ENCODE measurements at regions of chr6 and their contacts with region 1.

Region 1: GRCh38 chr6:10954590-10955010 is 67.7 kb downstream of the SYCP2L start:
- DNase-seq: peak; percentile 79
- H3K4me3 Mint-ChIP-seq: no peak overlapping the region
- H3K27ac Mint-ChIP-seq: no peak overlapping the region
- H3K4me1 Mint-ChIP-seq: no peaks in the 10 kb centered on the region
- H3K27me3 Mint-ChIP-seq: peaks cover 15% of the 10 kb centered on the region

Region 2: GRCh38 chr6:10722820-10723566 is 231.6 kb before region 1 on chr6 and contains the start of gene TMEM14C:
- CTCF ChIA-PET with region 1: no interaction called
- DNase-seq: peak; percentile 89
- H3K4me3 Mint-ChIP-seq: peak within 1 kb of the TSS; percentile 82
- H3K27ac Mint-ChIP-seq: peak within 1 kb of the TSS; percentile 90
- H3K4me1 Mint-ChIP-seq: peaks cover 56% of the 10 kb centered on the region
- H3K27me3 Mint-ChIP-seq: no peaks in the 10 kb centered on the region

Region 3: DNA sequence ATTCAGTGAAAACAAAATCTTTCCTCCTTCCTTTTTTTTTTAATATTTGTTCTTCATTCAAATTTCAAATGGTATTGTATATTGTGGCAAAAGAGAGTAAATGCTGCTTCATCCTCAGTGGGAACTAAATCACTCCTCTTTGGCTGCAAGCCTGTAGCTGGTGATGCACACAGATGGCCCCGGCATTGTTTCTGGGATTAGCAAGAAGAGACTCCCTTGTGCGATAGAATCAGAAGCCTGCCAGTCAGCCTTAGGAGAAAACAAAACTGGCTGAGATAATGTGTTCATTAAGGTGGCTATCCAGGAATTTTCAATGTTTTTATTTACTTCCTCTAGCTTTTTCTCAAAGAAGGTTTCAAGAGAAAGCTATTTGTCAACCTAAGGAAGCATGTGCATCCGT is 110.2 kb after region 1 on chr6:
- CTCF ChIA-PET with region 1: interaction called, 32 read pairs
- DNase-seq: no peak
- H3K4me3 Mint-ChIP-seq: no peak overlapping the region
- H3K27ac Mint-ChIP-seq: no peak overlapping the region
- H3K4me1 Mint-ChIP-seq: no peaks in the 10 kb centered on the region
- H3K27me3 Mint-ChIP-seq: peaks cover 7% of the 10 kb centered on the region

Region 4: DNA sequence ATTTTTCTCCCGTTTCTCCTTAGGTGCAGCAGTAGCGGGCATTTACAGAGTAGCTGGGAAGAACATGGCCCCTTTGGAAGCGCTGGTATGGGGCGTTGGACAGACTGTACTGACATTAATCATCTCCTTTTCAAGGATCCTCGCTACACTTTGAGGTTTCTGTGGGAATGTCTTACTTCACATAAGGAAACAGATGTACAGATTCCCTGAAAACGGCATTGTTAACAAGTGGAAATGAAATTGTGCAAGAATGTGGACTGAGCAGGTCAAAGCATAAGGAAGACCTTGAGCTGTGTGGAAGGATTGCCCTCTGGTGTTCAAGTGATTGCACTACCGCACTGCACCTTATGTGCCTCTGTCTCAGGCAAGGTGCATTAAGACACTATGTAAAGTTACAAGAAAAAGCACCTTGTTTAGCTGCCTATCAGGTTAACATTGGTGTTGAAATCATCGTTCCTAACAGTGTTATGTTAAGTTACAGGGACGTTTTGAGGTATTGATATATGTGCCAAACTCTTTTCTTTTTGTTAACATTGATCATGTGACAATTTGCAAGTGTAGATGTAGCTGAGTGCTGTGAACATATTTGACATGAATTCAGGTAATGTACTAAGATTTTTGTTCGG is 620.9 kb after region 1 on chr6:
- CTCF ChIA-PET with region 1: interaction called, 17 read pairs
- DNase-seq: peak; percentile 68
- H3K4me3 Mint-ChIP-seq: no peak overlapping the region
- H3K27ac Mint-ChIP-seq: no peak overlapping the region
- H3K4me1 Mint-ChIP-seq: no peaks in the 10 kb centered on the region
- H3K27me3 Mint-ChIP-seq: no peaks in the 10 kb centered on the region